Heart right ventricle (tissue), 16 donors: ENCODE measurements at regions of chr17 and their contacts with region 1.

Region 1: GRCh38 chr17:58631523-58632323 is 60.1 kb downstream of the TEX14 start:
- DNase-seq: peak; percentile 92 to 96
- ATAC-seq: peak; percentile 96 to 98 (median 97)
- H3K4me3 ChIP-seq: peak overlapping the region in 9 of 10 donors; percentile 32 to 50 (median 42)
- H3K27ac ChIP-seq: peak overlapping the region; percentile 9 to 89 (median 86)
- H3K4me1 ChIP-seq: peaks cover 0 to 19% (median 9%) of the 10 kb centered on the region in 9 donors
- H3K27me3 ChIP-seq: no peaks in the 10 kb centered on the region
- CTCF ChIP-seq: peak in 5 of 9 donors; percentile 24 to 52 (median 45)

Region 2: DNA sequence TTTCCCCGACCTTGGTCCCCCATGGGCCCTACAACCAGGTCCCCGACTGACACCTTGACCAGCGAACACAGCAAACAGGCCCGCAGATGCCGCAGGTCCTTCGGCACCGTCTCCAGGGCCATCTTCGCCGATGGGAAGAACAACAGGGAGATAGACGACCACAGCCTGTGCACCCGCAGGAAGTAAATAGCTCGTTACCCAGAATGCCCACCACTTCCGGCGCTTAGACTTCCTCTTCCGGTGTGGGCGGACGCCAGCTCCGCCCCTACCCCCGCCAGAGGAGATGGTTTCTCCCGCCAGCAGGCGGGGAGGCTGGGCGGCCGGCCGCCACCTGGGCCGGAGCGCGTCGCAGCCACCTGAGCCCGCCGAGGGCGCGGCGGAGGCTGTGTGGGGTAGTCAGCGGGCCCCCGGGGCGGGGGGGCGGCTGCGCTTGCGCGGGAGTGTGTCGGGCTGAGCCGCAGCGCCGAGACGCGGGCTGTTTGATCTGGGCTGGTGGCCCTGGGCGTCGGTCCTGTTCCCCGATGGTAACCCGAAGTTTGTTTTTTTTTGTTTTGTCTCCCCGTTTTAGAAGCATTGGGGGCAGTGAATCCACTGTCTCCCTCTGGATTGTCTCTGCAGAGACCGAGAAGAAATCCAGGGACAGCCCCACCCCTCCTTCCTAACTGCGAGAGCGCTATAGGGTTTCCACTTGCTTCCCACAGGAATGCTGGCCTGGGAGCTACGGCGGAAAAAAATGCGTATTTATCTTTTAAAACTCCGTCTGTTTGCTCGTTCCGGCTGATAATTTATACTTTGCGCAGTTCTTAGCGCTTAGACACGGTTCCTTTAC is 279.5 kb before region 1 on chr17 and contains the start of gene SUPT4H1:
- intact Hi-C with region 1: loop called in 1 of 10 experiments (anchors 10 kb)
- DNase-seq: peak; percentile 87 to 88
- ATAC-seq: peak; percentile 97 to 98 (median 98)
- H3K4me3 ChIP-seq: peak within 1 kb of the TSS; percentile 73 to 96 (median 82)
- H3K27ac ChIP-seq: peak within 1 kb of the TSS; percentile 83 to 98 (median 94)
- H3K4me1 ChIP-seq: peaks cover 0 to 35% (median 17%) of the 10 kb centered on the region in 9 donors
- H3K27me3 ChIP-seq: no peaks in the 10 kb centered on the region
- CTCF ChIP-seq: peak in 3 of 9 donors; percentile 8 to 30 (median 15)
- total RNA-seq, gene SUPT4H1: 49.0 to 73.4 (median 59.8) TPM

Region 3: DNA sequence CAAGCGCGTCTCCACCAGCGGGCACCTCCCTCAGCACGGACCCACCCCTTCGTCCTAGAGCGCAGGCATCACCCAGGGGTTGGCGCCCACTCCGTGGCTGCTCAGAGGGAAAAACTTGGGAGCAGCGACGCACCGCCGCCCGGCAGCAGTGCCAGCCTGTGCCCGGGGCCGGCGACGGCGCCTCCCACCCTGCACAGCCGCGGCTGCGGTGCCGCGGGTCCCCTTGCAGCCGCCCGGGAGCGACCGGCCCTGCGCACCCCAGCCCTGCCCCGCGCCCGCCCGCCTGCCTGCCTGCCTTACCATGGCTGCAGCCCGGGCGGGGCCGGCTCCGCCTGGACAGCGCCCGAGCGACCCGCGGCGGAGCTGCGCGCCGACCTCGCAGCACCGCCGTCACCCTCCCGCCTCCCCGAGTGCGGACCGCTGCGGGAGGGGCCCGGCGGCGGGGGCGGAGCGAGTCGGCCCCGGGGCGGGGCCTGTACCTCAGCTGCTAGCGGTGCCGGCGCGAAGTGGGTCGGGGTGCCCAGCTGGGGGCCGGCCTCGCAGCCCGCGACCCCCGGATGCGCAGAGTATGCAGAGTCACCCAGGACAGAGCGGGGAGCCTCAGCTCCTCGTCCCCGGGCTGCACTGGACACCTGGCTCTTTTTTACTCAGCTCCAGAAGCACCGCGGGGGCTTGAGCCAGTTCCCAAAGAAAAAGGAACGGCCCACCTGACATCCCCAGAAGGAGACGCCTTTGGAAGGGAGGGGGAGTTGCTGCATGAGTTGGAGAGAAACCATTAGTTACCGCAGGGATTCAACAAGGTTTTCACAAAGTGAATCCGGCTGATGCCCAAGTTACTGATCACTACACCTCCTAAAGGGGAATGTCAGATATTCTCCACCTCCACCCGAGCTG is 99.8 kb before region 1 on chr17:
- intact Hi-C with region 1: loop called in 2 of 10 experiments (anchors 5 to 10 kb)
- DNase-seq: peak; percentile 53 to 78
- ATAC-seq: peak; percentile 75 to 91 (median 82)
- H3K4me3 ChIP-seq: peak overlapping the region; percentile 44 to 75 (median 64)
- H3K27ac ChIP-seq: peak overlapping the region; percentile 50 to 87 (median 68)
- H3K4me1 ChIP-seq: peaks cover 7 to 73% (median 50%) of the 10 kb centered on the region in 9 donors
- H3K27me3 ChIP-seq: peaks cover 0 to 19% (median 0%) of the 10 kb centered on the region in 7 donors
- CTCF ChIP-seq: no peak

Region 4: GRCh38 chr17:58587702-58588254 is 43.9 kb before region 1 on chr17:
- intact Hi-C with region 1: loop called in 2 of 10 experiments (anchors 5 kb)
- DNase-seq: peak; percentile 39 to 40
- ATAC-seq: peak in 6 of 8 donors; percentile 41 to 79 (median 62)
- H3K4me3 ChIP-seq: no peak overlapping the region
- H3K27ac ChIP-seq: no peak overlapping the region
- H3K4me1 ChIP-seq: no peaks in the 10 kb centered on the region
- H3K27me3 ChIP-seq: no peaks in the 10 kb centered on the region
- CTCF ChIP-seq: peak; percentile 85 to 96 (median 94)

Region 5: DNA sequence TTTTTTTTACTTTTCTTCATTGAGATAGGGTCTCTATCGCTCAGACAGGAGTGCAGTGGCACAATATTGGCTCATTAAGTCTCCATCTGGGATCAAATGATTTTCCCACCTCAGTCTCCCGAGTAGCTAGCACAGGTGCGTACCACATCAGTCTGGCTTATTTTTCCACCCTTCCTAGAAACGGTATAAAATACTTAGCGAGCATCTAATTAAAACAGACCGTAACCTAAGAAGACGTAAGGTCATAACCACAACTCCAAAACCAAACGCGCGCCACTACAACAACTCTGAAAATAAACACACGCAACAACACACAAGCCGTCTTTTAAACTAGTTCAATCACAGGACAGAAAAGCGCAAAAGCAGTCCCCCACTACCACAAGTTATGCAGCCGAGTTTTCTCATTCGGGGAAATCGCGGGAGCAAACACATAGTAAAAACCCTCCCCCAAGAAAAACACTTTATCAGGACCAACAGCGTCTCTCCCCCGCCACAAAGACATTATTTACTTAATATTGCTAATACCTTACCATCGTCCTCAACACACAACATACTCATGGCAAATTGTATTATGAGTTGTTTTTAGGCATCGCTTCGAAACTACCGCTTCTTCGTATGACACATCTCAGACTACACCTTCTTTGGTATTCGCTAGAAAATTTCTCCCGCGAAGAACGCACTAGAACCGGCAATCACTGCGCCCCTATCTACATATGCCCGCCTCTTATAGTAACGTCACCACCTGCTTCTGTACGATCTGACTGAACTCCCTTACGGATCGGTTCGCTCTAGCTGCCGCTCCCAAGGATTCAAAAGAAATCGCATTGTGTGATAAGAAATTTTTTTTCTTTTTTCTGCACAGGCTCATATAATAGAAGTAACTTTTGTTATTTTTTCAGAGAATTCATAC is 27.3 kb after region 1 on chr17:
- intact Hi-C with region 1: loop called in 4 of 10 experiments (anchors 1 to 2 kb)
- DNase-seq: peak; percentile 16 to 92
- ATAC-seq: peak; percentile 95 to 98 (median 96)
- H3K4me3 ChIP-seq: peak overlapping the region in 9 of 10 donors; percentile 28 to 58 (median 49)
- H3K27ac ChIP-seq: peak overlapping the region; percentile 6 to 93 (median 78)
- H3K4me1 ChIP-seq: peaks cover 0 to 15% (median 3%) of the 10 kb centered on the region in 9 donors
- H3K27me3 ChIP-seq: no peaks in the 10 kb centered on the region
- CTCF ChIP-seq: no peak

Region 6: GRCh38 chr17:58692239-58693055 is 60.7 kb after region 1 on chr17 and contains the start of gene RAD51C:
- intact Hi-C with region 1: loop called in 3 of 10 experiments (anchors 1 to 10 kb)
- DNase-seq: peak; percentile 84 to 87
- ATAC-seq: peak; percentile 99 to 100 (median 99)
- H3K4me3 ChIP-seq: peak within 1 kb of the TSS; percentile 21 to 87 (median 72)
- H3K27ac ChIP-seq: peak within 1 kb of the TSS in 9 of 10 donors; percentile 67 to 90 (median 82)
- H3K4me1 ChIP-seq: peaks cover 0 to 25% (median 16%) of the 10 kb centered on the region in 9 donors
- H3K27me3 ChIP-seq: no peaks in the 10 kb centered on the region
- CTCF ChIP-seq: peak in 1 of 9 donors; percentile 19
- total RNA-seq, gene RAD51C: 33.2 to 40.7 (median 37.6) TPM